ENCODE measurements at regions of chr3 and their contacts with region 1.

Region 1: DNA sequence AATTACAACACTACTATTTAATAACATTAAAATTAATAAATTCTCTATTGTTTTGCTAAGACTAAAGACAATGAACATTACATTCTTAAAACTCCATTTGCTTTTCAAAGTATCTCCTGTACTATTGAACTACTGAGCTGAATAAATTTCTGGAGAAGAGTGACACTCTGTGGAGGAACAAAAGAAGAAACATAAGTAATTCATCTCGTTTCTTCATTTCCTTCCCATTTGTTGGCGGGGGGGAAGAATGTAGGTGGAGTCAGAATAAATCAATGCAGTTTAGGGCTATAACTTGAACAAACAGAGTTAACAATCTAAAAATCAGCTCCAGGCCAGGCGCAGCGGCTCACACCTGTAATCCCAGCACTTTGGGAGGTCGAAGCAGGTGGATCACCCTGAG is 32.7 kb downstream of the EFHB start:
- DNase-seq: no peak
- H3K4me3 ChIP-seq: no peak overlapping the region
- H3K27ac ChIP-seq: no peak overlapping the region
- H3K4me1 ChIP-seq: no peaks in the 10 kb centered on the region
- H3K27me3 ChIP-seq: no peaks in the 10 kb centered on the region
- CTCF ChIP-seq: no peak
- EP300 ChIP-seq: no peak
- POLR2A ChIP-seq: no peak
- RAD21 ChIP-seq: no peak

Region 2: DNA sequence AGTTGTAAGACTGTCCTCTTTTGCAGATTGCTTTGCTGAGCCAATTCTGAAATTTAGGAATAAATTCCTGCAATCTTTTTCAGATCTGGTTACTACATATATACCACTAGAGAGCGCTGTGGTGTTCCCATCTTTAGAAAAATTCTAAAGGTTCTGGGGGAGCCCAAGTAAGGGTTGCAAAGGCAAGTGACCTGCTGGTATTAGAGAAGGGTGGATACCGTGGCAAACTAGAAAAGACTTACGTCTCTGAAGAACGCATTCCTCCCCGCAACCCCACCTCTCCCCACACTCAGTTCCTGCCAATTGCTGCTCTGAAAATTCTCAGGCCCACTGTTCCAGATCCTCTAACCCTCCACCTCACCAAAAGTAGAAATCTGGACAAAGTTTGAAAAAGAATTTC is 15.9 kb before region 1 on chr3:
- CTCF ChIA-PET with region 1: interaction called, 12 read pairs
- POLR2A ChIA-PET with region 1: no interaction called
- DNase-seq: no peak
- H3K4me3 ChIP-seq: no peak overlapping the region
- H3K27ac ChIP-seq: no peak overlapping the region
- H3K4me1 ChIP-seq: peaks cover 0 to 3% (median 0%) of the 10 kb centered on the region in 4 experiments; a peak in 3 of 7 replicates
- H3K27me3 ChIP-seq: no peaks in the 10 kb centered on the region
- CTCF ChIP-seq: peak in 2 of 3 experiments; percentile 54; a peak in 2 of 4 replicates
- EP300 ChIP-seq: no peak
- POLR2A ChIP-seq: no peak
- RAD21 ChIP-seq: peak; percentile 70 to 76

Region 3: GRCh38 chr3:19961960-19962359 is 60.6 kb after region 1 on chr3:
- CTCF ChIA-PET with region 1: no interaction called
- POLR2A ChIA-PET with region 1: no interaction called
- DNase-seq: no peak
- H3K4me3 ChIP-seq: no peak overlapping the region
- H3K27ac ChIP-seq: no peak overlapping the region
- H3K4me1 ChIP-seq: no peaks in the 10 kb centered on the region
- H3K27me3 ChIP-seq: no peaks in the 10 kb centered on the region
- CTCF ChIP-seq: no peak
- EP300 ChIP-seq: no peak
- POLR2A ChIP-seq: no peak
- RAD21 ChIP-seq: no peak

Region 4: DNA sequence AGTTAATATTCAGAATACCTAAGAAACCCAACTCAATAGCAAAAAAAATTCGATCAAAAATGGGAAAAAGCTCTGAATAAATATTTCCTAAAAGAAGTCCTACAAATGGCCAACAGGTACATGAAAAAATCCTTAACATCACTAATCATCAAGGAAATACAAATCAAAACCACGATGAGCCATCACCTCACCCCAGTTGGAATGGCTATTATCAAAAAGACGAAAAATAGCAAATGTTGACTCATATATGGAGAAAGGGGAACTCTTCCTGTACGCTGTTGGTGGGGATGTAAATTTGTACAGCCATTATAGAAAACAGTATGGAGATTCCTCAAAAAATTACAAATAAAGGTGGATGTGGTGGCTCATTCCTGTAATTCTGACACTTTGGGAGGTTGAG is 314.3 kb after region 1 on chr3:
- CTCF ChIA-PET with region 1: no interaction called
- POLR2A ChIA-PET with region 1: no interaction called
- DNase-seq: no peak
- H3K4me3 ChIP-seq: no peak overlapping the region
- H3K27ac ChIP-seq: no peak overlapping the region
- H3K4me1 ChIP-seq: no peaks in the 10 kb centered on the region
- H3K27me3 ChIP-seq: no peaks in the 10 kb centered on the region
- CTCF ChIP-seq: no peak
- EP300 ChIP-seq: no peak
- POLR2A ChIP-seq: no peak
- RAD21 ChIP-seq: no peak

Measured in H1 (cell line).